Naive thymus-derived CD4-positive, alpha-beta T cell (primary cell): ENCODE measurements at regions of chr4 and their contacts with region 1.

Region 1: DNA sequence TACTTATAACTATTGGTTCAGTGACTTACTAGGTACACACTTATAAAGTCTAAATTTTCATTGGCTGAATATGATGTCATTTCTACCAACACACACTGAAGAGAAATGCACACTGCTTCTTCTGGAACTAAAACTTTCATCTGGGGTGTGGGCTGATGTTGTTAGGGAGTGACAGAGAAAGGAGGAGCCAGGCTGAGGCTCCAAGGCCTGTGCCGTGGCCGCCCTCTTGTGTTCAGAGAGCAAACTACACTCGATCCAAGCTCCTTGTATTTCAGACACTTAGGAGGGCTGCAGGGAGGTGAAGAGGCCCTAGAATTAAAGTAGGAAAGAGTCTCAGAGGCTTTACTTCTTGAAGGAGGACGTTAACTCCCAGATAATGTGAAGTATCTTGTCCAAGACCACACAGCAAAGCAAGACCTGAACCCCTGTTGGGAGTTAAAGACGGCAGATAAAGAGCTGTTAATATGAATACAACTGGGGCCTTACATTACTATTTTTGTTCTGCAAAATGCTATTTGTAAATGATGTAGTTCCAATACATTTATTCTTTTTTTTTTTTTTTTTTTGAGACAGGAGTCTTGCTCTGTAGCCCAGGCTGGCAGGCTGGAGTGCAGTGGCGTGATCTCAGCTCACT is 137.5 kb downstream of the AFAP1 start:
- DNase-seq: peak; percentile 42 to 79 (median 68)
- ATAC-seq: peak; percentile 94
- H3K4me3 ChIP-seq: no peak overlapping the region
- H3K4me3 Mint-ChIP-seq: no peak overlapping the region
- H3K27ac ChIP-seq: no peak overlapping the region
- H3K27ac Mint-ChIP-seq: peak overlapping the region in 5 of 9 donors; percentile 2 to 74 (median 45)
- H3K4me1 ChIP-seq: no peaks in the 10 kb centered on the region
- H3K4me1 Mint-ChIP-seq: peaks cover 5 to 22% (median 14%) of the 10 kb centered on the region in 7 donors
- H3K27me3 ChIP-seq: no peaks in the 10 kb centered on the region
- H3K27me3 Mint-ChIP-seq: no peaks in the 10 kb centered on the region

Region 2: DNA sequence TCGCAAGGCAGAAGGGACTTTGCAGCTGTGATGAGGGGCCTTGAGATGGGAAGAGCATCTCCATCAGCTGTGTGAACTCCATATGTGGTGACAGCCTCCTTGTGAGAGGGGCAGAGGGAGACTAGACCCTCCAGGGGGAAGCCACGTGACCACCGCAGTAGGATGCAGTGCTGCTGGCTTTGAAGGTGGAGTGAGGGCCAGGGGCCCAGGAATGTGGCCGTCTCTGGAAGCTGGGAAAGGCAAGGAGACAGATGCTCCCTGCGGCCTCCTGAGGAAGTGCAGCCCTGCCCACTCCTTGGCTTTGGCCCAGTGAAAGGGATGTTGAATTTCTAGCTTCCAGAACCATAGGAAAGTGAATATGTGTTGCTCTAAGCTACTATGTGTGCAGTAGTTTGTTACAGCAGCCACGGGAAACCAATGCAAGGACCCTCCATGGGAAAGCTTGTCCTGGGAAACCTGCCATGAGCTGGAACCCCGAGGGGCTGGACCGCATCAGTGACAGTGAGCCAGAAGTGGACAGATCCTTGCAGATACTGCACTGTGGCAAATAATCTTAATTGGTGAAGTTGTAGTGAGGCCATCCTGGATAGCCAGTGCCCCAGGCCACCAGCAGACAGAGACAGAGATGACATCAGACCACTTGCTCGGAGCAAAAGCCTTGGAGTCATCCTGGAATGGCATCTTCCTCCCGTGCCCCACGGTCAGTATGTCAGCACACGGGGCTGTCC is 645.3 kb before region 1 on chr4:
- CTCF ChIA-PET with region 1: no interaction called
- POLR2A ChIA-PET with region 1: no interaction called
- intact Hi-C with region 1: no loop called
- DNase-seq: no peak
- ATAC-seq: no peak
- H3K4me3 ChIP-seq: no peak overlapping the region
- H3K4me3 Mint-ChIP-seq: no peak overlapping the region
- H3K27ac ChIP-seq: no peak overlapping the region
- H3K27ac Mint-ChIP-seq: no peak overlapping the region
- H3K4me1 ChIP-seq: no peaks in the 10 kb centered on the region
- H3K4me1 Mint-ChIP-seq: no peaks in the 10 kb centered on the region
- H3K27me3 ChIP-seq: no peaks in the 10 kb centered on the region
- H3K27me3 Mint-ChIP-seq: peaks cover 15 to 39% (median 24%) of the 10 kb centered on the region in 5 donors

Region 3: GRCh38 chr4:7649741-7650531 is 152.3 kb before region 1 on chr4:
- CTCF ChIA-PET with region 1: no interaction called
- POLR2A ChIA-PET with region 1: no interaction called
- intact Hi-C with region 1: loop called in 1 of 2 experiments (anchors 10 kb)
- DNase-seq: peak in 7 of 9 donors; percentile 7 to 33 (median 27)
- ATAC-seq: peak; percentile 75
- H3K4me3 ChIP-seq: no peak overlapping the region
- H3K4me3 Mint-ChIP-seq: peak overlapping the region; percentile 14 to 68 (median 60)
- H3K27ac ChIP-seq: no peak overlapping the region
- H3K27ac Mint-ChIP-seq: peak overlapping the region in 8 of 9 donors; percentile 1 to 72 (median 44)
- H3K4me1 ChIP-seq: peaks cover 0 to 58% of the 10 kb centered on the region in 2 donors
- H3K4me1 Mint-ChIP-seq: peaks cover 11 to 44% (median 21%) of the 10 kb centered on the region in 7 donors
- H3K27me3 ChIP-seq: no peaks in the 10 kb centered on the region
- H3K27me3 Mint-ChIP-seq: peaks cover 0 to 62% (median under 1%) of the 10 kb centered on the region in 5 donors

Region 4: DNA sequence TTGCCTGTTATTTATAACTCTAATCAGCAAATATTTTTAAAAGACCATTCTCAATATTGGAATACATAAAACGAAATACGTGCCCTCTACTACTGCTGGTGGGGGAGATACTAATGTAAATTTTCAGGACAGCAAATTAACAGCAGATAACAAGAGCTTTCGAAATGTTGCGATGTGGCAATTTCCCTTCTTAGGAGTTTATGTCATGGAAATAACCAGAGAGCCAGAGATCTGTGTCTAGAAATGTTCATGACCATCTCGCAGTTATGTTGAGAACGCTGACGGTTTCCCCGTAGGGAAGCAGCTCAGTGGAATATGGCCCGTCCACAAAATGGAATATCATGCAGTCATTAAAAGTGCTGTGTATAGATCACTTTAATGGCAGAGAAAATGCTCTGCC is 129.1 kb before region 1 on chr4:
- CTCF ChIA-PET with region 1: no interaction called
- POLR2A ChIA-PET with region 1: no interaction called
- intact Hi-C with region 1: no loop called
- DNase-seq: no peak
- ATAC-seq: peak; percentile 27
- H3K4me3 ChIP-seq: no peak overlapping the region
- H3K4me3 Mint-ChIP-seq: no peak overlapping the region
- H3K27ac ChIP-seq: no peak overlapping the region
- H3K27ac Mint-ChIP-seq: no peak overlapping the region
- H3K4me1 ChIP-seq: no peaks in the 10 kb centered on the region
- H3K4me1 Mint-ChIP-seq: peaks cover 0 to 1% (median 0%) of the 10 kb centered on the region in 7 donors
- H3K27me3 ChIP-seq: no peaks in the 10 kb centered on the region
- H3K27me3 Mint-ChIP-seq: peaks cover 0 to 7% (median 3%) of the 10 kb centered on the region in 5 donors

Region 5: GRCh38 chr4:7770224-7771050 is 31.8 kb before region 1 on chr4:
- CTCF ChIA-PET with region 1: interaction called, 17 read pairs
- POLR2A ChIA-PET with region 1: interaction called, 3 read pairs
- intact Hi-C with region 1: loop called (anchors 1 kb)
- DNase-seq: peak in 1 of 9 donors; percentile 4
- ATAC-seq: no peak
- H3K4me3 ChIP-seq: peak overlapping the region; percentile 30
- H3K4me3 Mint-ChIP-seq: peak overlapping the region; percentile 45 to 86 (median 70)
- H3K27ac ChIP-seq: peak overlapping the region; percentile 47
- H3K27ac Mint-ChIP-seq: peak overlapping the region; percentile 48 to 90 (median 79)
- H3K4me1 ChIP-seq: peaks cover 8 to 16% of the 10 kb centered on the region in 2 donors
- H3K4me1 Mint-ChIP-seq: peaks cover 8 to 37% (median 31%) of the 10 kb centered on the region in 7 donors
- H3K27me3 ChIP-seq: no peaks in the 10 kb centered on the region
- H3K27me3 Mint-ChIP-seq: no peaks in the 10 kb centered on the region

Region 6: GRCh38 chr4:7863911-7864681 is 61.9 kb after region 1 on chr4:
- CTCF ChIA-PET with region 1: interaction called, 5 read pairs
- POLR2A ChIA-PET with region 1: no interaction called
- intact Hi-C with region 1: loop called in 1 of 2 experiments (anchors 5 kb)
- DNase-seq: peak in 7 of 9 donors; percentile 20 to 68 (median 38)
- ATAC-seq: peak; percentile 60
- H3K4me3 ChIP-seq: no peak overlapping the region
- H3K4me3 Mint-ChIP-seq: peak overlapping the region in 7 of 10 donors; percentile 36 to 75 (median 65)
- H3K27ac ChIP-seq: no peak overlapping the region
- H3K27ac Mint-ChIP-seq: peak overlapping the region; percentile 67 to 96 (median 89)
- H3K4me1 ChIP-seq: peaks cover 0 to 10% of the 10 kb centered on the region in 2 donors
- H3K4me1 Mint-ChIP-seq: peaks cover 8 to 45% (median 33%) of the 10 kb centered on the region in 7 donors
- H3K27me3 ChIP-seq: no peaks in the 10 kb centered on the region
- H3K27me3 Mint-ChIP-seq: peaks cover 0 to 6% (median 0%) of the 10 kb centered on the region in 5 donors

Region 7: DNA sequence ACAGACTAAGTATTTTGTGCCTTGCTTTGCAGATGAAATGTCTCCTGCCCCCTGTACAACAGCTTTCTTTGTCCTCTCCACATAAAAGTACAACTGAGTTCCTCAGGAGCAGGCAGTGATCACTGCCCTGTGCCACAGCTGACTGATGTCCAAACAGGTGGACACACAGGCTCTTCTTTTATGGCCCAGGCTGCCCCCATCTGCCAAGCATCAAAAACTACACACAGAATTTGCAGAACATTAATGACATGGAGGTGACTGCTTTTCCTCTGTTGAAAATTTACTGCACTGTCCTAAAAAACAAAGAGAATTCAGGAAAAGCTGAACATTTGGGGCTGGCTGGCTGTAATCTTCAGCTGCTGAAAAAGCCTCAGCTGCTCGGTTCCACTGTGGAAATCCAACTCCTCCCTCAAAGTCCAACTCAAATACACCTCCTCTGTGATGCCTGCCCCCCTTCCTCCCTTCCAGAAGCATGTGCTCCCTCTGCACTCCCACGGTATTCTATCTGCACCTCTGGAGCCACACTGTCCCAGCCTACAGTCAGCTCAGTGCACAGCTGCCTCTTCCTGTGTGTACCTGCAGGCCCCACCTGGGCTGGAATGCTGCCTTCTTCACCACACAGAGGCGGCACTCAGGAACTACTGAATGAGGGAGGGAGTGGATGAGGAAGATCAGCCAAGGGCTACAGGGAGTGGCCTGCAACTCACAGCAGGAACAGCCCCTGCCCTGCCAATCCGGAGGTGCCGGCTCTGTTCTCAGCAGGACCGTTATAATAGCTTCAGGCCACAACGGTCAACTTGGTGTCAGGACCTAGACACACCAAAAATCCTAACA is 127.1 kb after region 1 on chr4:
- CTCF ChIA-PET with region 1: no interaction called
- POLR2A ChIA-PET with region 1: no interaction called
- intact Hi-C with region 1: no loop called
- DNase-seq: no peak
- ATAC-seq: no peak
- H3K4me3 ChIP-seq: no peak overlapping the region
- H3K4me3 Mint-ChIP-seq: peak overlapping the region in 2 of 10 donors; percentile 47 to 48
- H3K27ac ChIP-seq: no peak overlapping the region
- H3K27ac Mint-ChIP-seq: peak overlapping the region in 2 of 9 donors; percentile 26 to 36
- H3K4me1 ChIP-seq: peaks cover 0 to 3% of the 10 kb centered on the region in 2 donors
- H3K4me1 Mint-ChIP-seq: peaks cover 7 to 63% (median 49%) of the 10 kb centered on the region in 7 donors
- H3K27me3 ChIP-seq: no peaks in the 10 kb centered on the region
- H3K27me3 Mint-ChIP-seq: no peaks in the 10 kb centered on the region

Region 8: GRCh38 chr4:7939377-7940108 is 137.3 kb after region 1 on chr4 and contains the start of gene AFAP1:
- CTCF ChIA-PET with region 1: interaction called, 5 read pairs
- POLR2A ChIA-PET with region 1: no interaction called
- intact Hi-C with region 1: loop called in 1 of 2 experiments (anchors 1 kb)
- DNase-seq: peak; percentile 84 to 95 (median 89)
- ATAC-seq: peak; percentile 95
- H3K4me3 ChIP-seq: peak within 1 kb of the TSS; percentile 68
- H3K4me3 Mint-ChIP-seq: peak within 1 kb of the TSS; percentile 64 to 91 (median 74)
- H3K27ac ChIP-seq: peak within 1 kb of the TSS; percentile 78
- H3K27ac Mint-ChIP-seq: peak within 1 kb of the TSS in 4 of 9 donors; percentile 63 to 89 (median 74)
- H3K4me1 ChIP-seq: peaks cover 10 to 12% of the 10 kb centered on the region in 2 donors
- H3K4me1 Mint-ChIP-seq: peaks cover 16 to 42% (median 33%) of the 10 kb centered on the region in 7 donors
- H3K27me3 ChIP-seq: no peaks in the 10 kb centered on the region
- H3K27me3 Mint-ChIP-seq: peaks cover 0 to 30% (median 0%) of the 10 kb centered on the region in 5 donors
- total RNA-seq, gene AFAP1: 8.6 to 27.2 (median 13.3) TPM

Region 9: DNA sequence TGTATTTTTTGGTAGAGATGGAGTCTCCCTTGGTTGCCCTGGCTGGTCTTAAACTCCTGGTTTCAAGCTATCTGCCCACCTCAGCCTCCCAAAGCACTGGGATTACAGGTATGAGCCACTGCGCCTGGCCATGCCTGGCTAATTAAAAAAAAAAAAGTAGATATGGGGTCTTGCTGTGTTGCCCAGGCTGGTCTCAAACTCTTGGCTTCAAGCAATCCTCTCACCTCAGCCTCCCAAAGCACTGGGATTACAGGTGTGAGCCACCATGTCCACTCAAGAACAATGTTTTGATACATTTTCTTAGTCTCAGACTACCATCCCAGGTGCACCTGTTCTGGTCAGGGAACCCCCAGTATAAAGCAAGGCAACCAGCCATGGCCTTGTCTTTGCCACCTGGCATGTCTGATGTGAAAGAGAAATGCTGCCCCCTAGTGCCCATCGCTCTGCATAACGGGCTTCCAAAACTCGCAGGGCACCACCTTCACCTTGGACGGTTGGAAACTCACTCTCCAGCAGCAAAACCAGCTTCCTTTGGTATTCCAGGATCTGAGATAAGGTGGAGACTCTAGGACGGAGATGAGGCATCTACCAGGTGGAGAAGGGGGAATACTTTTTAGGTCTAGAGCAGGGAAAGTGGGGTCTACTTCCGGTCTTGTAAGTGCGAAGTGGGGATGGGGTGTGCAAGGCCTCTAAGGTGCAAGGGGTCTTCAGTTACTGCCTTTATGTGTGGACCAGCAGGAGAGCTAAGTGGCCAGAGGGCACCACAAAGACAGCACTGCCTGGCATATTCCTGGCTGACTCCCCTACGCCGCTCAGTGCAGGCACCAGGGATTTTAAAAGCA is 185.2 kb after region 1 on chr4:
- CTCF ChIA-PET with region 1: interaction called, 62 read pairs
- POLR2A ChIA-PET with region 1: interaction called, 4 read pairs
- intact Hi-C with region 1: loop called (anchors 1 kb)
- DNase-seq: peak; percentile 48 to 74 (median 67)
- ATAC-seq: peak; percentile 83
- H3K4me3 ChIP-seq: no peak overlapping the region
- H3K4me3 Mint-ChIP-seq: no peak overlapping the region
- H3K27ac ChIP-seq: no peak overlapping the region
- H3K27ac Mint-ChIP-seq: peak overlapping the region in 1 of 9 donors; percentile 67
- H3K4me1 ChIP-seq: no peaks in the 10 kb centered on the region
- H3K4me1 Mint-ChIP-seq: peaks cover 0 to 11% (median 9%) of the 10 kb centered on the region in 7 donors
- H3K27me3 ChIP-seq: no peaks in the 10 kb centered on the region
- H3K27me3 Mint-ChIP-seq: peaks cover 0 to 3% (median 0%) of the 10 kb centered on the region in 5 donors